CD4-positive, alpha-beta memory T cell (primary cell): ENCODE measurements at regions of chr1 and their contacts with region 1.

Region 1: GRCh38 chr1:65419681-65420589 is 533 bp upstream of the LEPR start:
- DNase-seq: peak; percentile 97 to 99 (median 98)
- H3K4me3 ChIP-seq: peak overlapping the region; percentile 76 to 79
- H3K4me3 Mint-ChIP-seq: peak overlapping the region in 1 of 8 donors; percentile 94
- H3K27ac ChIP-seq: peak overlapping the region; percentile 82
- H3K27ac Mint-ChIP-seq: peak overlapping the region in 5 of 7 donors; percentile 91 to 96 (median 96)
- H3K4me1 ChIP-seq: peaks cover 38% of the 10 kb centered on the region
- H3K4me1 Mint-ChIP-seq: peaks cover 10 to 27% (median 17%) of the 10 kb centered on the region in 4 donors
- H3K27me3 ChIP-seq: no peaks in the 10 kb centered on the region
- H3K27me3 Mint-ChIP-seq: peaks cover 0 to 2% of the 10 kb centered on the region in 2 donors

Region 2: DNA sequence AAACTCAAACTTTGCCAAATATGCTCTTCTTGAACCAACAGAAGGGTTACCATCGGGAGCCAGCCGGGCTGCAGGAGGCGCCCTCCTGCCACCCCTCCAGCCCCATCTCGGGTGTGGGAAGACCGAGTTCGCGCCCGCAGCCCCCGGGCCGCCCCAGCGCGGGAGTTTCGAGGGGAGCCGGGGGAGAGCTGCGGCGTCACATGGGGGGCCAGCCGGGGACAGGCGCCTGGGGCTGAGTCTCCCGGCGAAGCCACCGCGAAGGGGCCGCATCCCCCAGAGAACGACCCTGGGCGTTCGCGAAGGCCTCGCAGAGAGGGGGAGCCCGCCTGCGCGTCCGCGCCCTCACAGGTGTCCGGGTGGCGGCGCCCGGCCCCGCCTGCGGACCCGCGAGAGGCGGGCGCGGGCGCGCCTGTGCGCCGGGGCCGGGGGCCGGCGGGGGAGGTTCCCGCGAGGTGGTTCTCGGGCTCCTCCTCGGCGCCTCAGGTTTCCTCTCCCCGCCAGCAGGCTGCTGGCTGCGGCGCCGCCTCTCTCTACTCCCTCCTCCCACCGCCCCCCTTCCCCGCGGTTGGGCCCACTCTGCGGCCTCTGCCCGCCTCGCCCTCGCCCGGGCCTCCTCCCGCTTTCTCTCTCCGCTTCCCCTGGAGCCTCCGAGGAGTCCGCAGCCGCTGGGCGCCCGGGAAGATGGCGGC is 675.3 kb before region 1 on chr1 and contains the start of gene RAVER2:
- CTCF ChIA-PET with region 1: no interaction called
- POLR2A ChIA-PET with region 1: no interaction called
- intact Hi-C with region 1: loop called (anchors 10 kb)
- DNase-seq: peak; percentile 53 to 75 (median 62)
- H3K4me3 ChIP-seq: peak within 1 kb of the TSS; percentile 17 to 54
- H3K4me3 Mint-ChIP-seq: peak within 1 kb of the TSS; percentile 87 to 94 (median 92)
- H3K27ac ChIP-seq: peak within 1 kb of the TSS; percentile 43
- H3K27ac Mint-ChIP-seq: peak within 1 kb of the TSS; percentile 77 to 90 (median 82)
- H3K4me1 ChIP-seq: peaks cover 13% of the 10 kb centered on the region
- H3K4me1 Mint-ChIP-seq: peaks cover 9 to 30% (median 22%) of the 10 kb centered on the region in 4 donors
- H3K27me3 ChIP-seq: peaks cover 3% of the 10 kb centered on the region
- H3K27me3 Mint-ChIP-seq: peaks cover 2 to 3% of the 10 kb centered on the region in 2 donors
- total RNA-seq, gene RAVER2: 1.7 to 2.1 TPM

Region 3: DNA sequence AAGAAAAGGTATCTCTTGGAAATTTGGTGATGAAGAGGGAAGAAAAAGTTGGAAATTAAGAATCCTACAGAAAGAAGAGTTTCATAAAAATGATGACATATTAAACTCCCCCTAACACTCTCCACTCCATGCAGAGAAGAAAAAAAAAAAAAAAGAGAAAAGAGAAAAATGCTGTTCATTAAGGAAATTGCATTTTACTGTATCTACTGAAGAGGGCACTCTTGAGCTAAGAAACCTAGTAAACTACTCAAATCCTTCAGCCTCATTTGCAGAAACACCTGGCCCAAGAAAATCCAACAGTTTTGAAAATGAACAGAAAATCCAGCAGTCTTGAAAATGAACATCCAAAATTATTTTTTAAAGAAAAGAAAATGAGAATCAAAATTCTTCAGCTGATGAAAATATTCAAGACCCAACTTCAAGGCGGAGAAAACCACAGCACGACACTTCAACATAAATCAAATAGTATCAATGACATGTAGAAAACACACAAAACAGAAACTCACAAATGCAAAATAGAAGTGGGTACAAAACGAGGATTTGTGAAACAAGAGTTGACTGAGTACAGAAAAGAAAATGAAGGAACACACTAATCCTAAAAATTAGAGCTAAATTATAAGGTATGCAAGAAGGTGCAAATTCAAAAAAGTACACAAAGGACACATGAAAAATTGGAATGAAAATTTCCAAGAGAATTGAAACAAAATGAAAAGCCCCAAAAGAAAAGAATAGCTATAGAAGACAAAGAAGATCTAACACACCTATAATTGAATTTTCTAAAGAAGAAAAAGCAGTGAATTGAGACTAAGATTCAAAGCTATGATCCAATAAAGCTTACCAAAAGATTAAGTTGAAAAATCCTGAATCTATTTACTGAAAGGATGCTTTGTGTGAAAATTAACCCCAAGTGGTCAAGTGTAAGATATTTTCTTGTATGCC is 183.8 kb before region 1 on chr1:
- CTCF ChIA-PET with region 1: no interaction called
- POLR2A ChIA-PET with region 1: interaction called, 3 read pairs
- intact Hi-C with region 1: loop called (anchors 5 kb)
- DNase-seq: peak in 4 of 5 donors; percentile 23 to 37 (median 24)
- H3K4me3 ChIP-seq: no peak overlapping the region
- H3K4me3 Mint-ChIP-seq: no peak overlapping the region
- H3K27ac ChIP-seq: no peak overlapping the region
- H3K27ac Mint-ChIP-seq: no peak overlapping the region
- H3K4me1 ChIP-seq: no peaks in the 10 kb centered on the region
- H3K4me1 Mint-ChIP-seq: no peaks in the 10 kb centered on the region
- H3K27me3 ChIP-seq: no peaks in the 10 kb centered on the region
- H3K27me3 Mint-ChIP-seq: peaks cover 8 to 11% of the 10 kb centered on the region in 2 donors

Region 4: GRCh38 chr1:65265651-65266351 is 154.1 kb before region 1 on chr1:
- CTCF ChIA-PET with region 1: no interaction called
- POLR2A ChIA-PET with region 1: no interaction called
- intact Hi-C with region 1: loop called (anchors 2 kb)
- DNase-seq: peak; percentile 32 to 56 (median 45)
- H3K4me3 ChIP-seq: peak overlapping the region in 1 of 2 donors; percentile 46
- H3K4me3 Mint-ChIP-seq: peak overlapping the region; percentile 68 to 80 (median 74)
- H3K27ac ChIP-seq: no peak overlapping the region
- H3K27ac Mint-ChIP-seq: peak overlapping the region in 2 of 7 donors; percentile 23 to 48
- H3K4me1 ChIP-seq: peaks cover 15% of the 10 kb centered on the region
- H3K4me1 Mint-ChIP-seq: peaks cover 8 to 15% (median 12%) of the 10 kb centered on the region in 4 donors
- H3K27me3 ChIP-seq: peaks cover 4% of the 10 kb centered on the region
- H3K27me3 Mint-ChIP-seq: peaks cover 13 to 15% of the 10 kb centered on the region in 2 donors

Region 5: DNA sequence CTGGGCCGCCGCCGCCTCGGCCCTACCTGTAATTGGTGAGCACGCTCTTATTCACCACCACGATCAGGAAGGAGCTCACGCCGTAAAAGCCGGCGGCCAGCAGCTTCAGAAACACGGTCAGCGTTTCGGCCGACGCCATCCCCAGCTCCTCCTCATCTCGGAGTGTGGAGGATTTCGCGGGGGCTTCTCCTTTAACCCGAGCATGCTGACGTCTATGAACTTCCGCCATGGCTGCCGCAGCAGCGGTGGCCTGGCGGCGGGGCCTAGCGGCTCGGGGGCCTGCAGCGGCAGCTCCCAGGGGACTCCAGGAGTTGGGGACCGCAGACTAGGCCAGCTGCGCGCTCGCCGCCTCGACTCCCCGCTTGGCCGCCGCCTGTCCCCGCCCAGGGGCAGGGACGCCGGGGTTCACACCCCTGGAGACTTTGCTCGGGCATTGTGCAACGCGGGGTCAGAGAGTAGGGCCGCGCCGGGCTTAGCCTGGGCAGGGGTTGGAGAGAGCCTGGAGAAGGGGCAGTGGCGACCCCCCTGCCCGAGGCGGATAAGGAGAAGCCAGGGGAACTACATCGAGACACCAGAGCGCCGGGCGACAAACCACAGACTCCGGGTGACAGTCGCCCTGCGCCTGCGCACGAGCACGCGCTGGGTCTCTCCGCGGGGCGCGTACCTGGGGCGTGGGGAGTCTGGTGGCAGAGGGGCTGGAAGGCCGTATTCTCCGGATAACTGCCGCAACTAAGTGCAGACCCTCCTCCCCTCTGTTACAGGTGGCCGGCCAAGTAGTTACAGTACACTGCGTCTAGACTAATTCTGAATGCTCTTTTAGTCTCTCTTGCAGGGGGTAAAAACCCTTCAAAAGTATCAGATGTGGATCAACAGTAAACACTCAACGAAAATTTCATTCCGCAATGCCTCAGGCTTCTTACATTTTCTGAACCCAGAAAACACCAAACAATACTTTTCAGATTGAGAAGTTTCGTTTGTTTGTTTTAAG is 1634.1 kb after region 1 on chr1 and contains the start of gene SLC35D1:
- CTCF ChIA-PET with region 1: no interaction called
- POLR2A ChIA-PET with region 1: no interaction called
- intact Hi-C with region 1: loop called (anchors 2 kb)
- DNase-seq: peak; percentile 68 to 82 (median 77)
- H3K4me3 ChIP-seq: peak within 1 kb of the TSS; percentile 73 to 88
- H3K4me3 Mint-ChIP-seq: peak within 1 kb of the TSS; percentile 93 to 96 (median 95)
- H3K27ac ChIP-seq: peak within 1 kb of the TSS; percentile 91
- H3K27ac Mint-ChIP-seq: peak within 1 kb of the TSS; percentile 66 to 98 (median 97)
- H3K4me1 ChIP-seq: peaks cover 25% of the 10 kb centered on the region
- H3K4me1 Mint-ChIP-seq: peaks cover 21 to 38% (median 28%) of the 10 kb centered on the region in 4 donors
- H3K27me3 ChIP-seq: no peaks in the 10 kb centered on the region
- H3K27me3 Mint-ChIP-seq: no peaks in the 10 kb centered on the region
- total RNA-seq, gene SLC35D1: 16.9 to 17.7 TPM